ENCODE measurements at regions of chr3 and their contacts with region 1.

Region 1: GRCh38 chr3:29280404-29281093 is at the start of gene RBMS3:
- DNase-seq: peak; percentile 74
- H3K4me3 Mint-ChIP-seq: peak within 1 kb of the TSS; percentile 85
- H3K27ac Mint-ChIP-seq: peak within 1 kb of the TSS; percentile 78
- H3K4me1 Mint-ChIP-seq: peaks cover 30% of the 10 kb centered on the region
- H3K27me3 Mint-ChIP-seq: peaks cover 5% of the 10 kb centered on the region
- total RNA-seq, gene RBMS3: 4.3 and 5.0 TPM in 2 replicates

Region 2: GRCh38 chr3:28916713-28917499 is 363.6 kb before region 1 on chr3:
- intact Hi-C with region 1: loop called (anchors 2 kb)
- DNase-seq: peak; percentile 76
- H3K4me3 Mint-ChIP-seq: no peak overlapping the region
- H3K27ac Mint-ChIP-seq: no peak overlapping the region
- H3K4me1 Mint-ChIP-seq: peaks cover 11% of the 10 kb centered on the region
- H3K27me3 Mint-ChIP-seq: peaks cover 7% of the 10 kb centered on the region

Region 3: GRCh38 chr3:29026286-29026685 is 254.3 kb before region 1 on chr3:
- intact Hi-C with region 1: loop called (anchors 5 kb)
- DNase-seq: no peak
- H3K4me3 Mint-ChIP-seq: no peak overlapping the region
- H3K27ac Mint-ChIP-seq: peak overlapping the region; percentile 71
- H3K4me1 Mint-ChIP-seq: peaks cover 5% of the 10 kb centered on the region
- H3K27me3 Mint-ChIP-seq: no peaks in the 10 kb centered on the region

Region 4: GRCh38 chr3:29255854-29256696 is 24.5 kb before region 1 on chr3:
- intact Hi-C with region 1: loop called (anchors 2 kb)
- DNase-seq: no peak
- H3K4me3 Mint-ChIP-seq: no peak overlapping the region
- H3K27ac Mint-ChIP-seq: peak overlapping the region; percentile 10
- H3K4me1 Mint-ChIP-seq: peaks cover 7% of the 10 kb centered on the region
- H3K27me3 Mint-ChIP-seq: no peaks in the 10 kb centered on the region

Region 5: DNA sequence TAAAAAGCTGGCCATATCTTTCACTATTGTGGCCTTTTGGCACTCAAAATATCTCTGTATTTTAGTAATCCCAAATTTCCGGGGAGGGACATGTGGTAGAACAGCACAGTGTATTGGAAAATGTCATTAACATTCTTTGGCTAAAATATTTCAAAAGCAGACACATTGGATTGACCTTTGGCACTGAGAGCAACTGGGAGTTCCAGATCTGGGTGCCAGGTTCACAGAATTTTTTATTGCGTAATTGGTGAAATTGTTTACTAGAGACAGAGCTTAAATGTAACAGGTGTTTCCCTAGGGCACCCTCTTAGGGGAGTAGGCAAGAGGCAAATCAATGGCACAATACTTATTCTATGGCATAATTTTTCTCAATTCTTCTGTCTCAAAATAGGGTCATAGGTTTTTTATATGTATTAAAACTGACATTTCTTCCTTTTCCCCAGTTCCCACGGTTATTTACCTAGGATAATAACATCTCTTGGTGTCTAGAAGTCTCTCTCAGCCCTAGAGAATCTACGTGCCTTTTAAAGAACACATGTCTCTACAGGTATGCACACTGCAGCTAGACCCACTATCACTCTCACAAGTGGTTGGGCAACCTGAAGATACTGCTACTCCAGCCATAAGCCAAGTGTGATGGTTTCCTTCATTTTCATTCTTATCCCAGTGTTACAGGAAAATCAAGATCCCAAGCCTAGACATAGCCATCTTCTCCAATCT is 10.9 kb after region 1 on chr3:
- intact Hi-C with region 1: no loop called
- DNase-seq: no peak
- H3K4me3 Mint-ChIP-seq: no peak overlapping the region
- H3K27ac Mint-ChIP-seq: no peak overlapping the region
- H3K4me1 Mint-ChIP-seq: peaks cover 2% of the 10 kb centered on the region
- H3K27me3 Mint-ChIP-seq: no peaks in the 10 kb centered on the region

Measured in activated CD4-positive, alpha-beta T cell treated with anti-CD3 and anti-CD28 coated beads, Interleukin-2, amount 10 ng/mL, durations not matched to agents 24 days and 14 days (primary cell).